ENCODE measurements at regions of chr7 and their contacts with region 1.

Region 1: GRCh38 chr7:149742075-149742701 is 31.2 kb downstream of the ZNF467 start:
- DNase-seq: peak; percentile 58
- ATAC-seq: peak; percentile 89
- H3K4me3 Mint-ChIP-seq: peak overlapping the region; percentile 76
- H3K27ac Mint-ChIP-seq: no peak overlapping the region
- H3K4me1 Mint-ChIP-seq: peaks cover 10% of the 10 kb centered on the region
- H3K27me3 Mint-ChIP-seq: peaks cover 26% of the 10 kb centered on the region
- CTCF ChIP-seq: peak; percentile 64

Region 2: GRCh38 chr7:149615690-149616270 is 126.4 kb before region 1 on chr7:
- CTCF ChIA-PET with region 1: no interaction called
- POLR2A ChIA-PET with region 1: no interaction called
- intact Hi-C with region 1: no loop called
- DNase-seq: no peak
- ATAC-seq: no peak
- H3K4me3 Mint-ChIP-seq: no peak overlapping the region
- H3K27ac Mint-ChIP-seq: no peak overlapping the region
- H3K4me1 Mint-ChIP-seq: peaks cover 12% of the 10 kb centered on the region
- H3K27me3 Mint-ChIP-seq: no peaks in the 10 kb centered on the region
- CTCF ChIP-seq: no peak

Region 3: GRCh38 chr7:149662591-149663095 is 79.5 kb before region 1 on chr7:
- CTCF ChIA-PET with region 1: interaction called, 36 read pairs
- POLR2A ChIA-PET with region 1: no interaction called
- intact Hi-C with region 1: loop called (anchors 1 kb)
- DNase-seq: peak; percentile 25
- ATAC-seq: peak; percentile 66
- H3K4me3 Mint-ChIP-seq: no peak overlapping the region
- H3K27ac Mint-ChIP-seq: no peak overlapping the region
- H3K4me1 Mint-ChIP-seq: no peaks in the 10 kb centered on the region
- H3K27me3 Mint-ChIP-seq: peaks cover 41% of the 10 kb centered on the region
- CTCF ChIP-seq: no peak

Region 4: DNA sequence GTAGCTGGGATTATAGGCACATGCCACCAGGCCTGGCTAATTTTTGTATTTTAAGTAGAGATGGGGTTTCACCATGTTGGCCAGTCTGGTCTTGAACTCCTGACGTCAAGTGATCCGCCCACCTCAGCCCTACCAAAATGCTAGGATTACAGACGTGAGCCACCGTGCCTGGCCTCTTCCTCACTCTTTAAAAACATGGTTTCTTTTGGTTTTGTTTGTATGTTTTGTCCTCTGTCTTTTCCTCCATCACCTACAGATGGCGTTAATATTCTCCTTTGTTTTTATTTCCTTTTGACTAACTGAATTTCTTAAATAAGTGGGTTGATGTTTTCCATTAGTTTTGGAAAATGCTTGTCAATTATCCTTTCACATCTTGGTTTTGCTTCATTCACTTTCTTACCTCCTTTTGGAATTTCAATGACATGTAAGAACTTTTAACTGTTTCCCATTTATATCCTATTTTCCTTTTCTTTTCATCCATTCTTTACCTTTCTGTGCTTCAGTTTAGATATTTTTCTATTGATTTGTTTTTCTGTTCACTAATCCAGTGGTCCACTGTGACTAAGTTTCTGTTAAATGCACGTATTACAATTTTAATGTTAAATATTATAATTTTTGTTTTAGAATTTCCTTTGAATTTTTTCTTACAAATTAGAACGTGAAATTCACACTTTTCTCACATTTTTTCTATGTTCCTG is 72.9 kb before region 1 on chr7:
- CTCF ChIA-PET with region 1: interaction called, 14 read pairs
- POLR2A ChIA-PET with region 1: no interaction called
- intact Hi-C with region 1: loop called (anchors 1 kb)
- DNase-seq: no peak
- ATAC-seq: no peak
- H3K4me3 Mint-ChIP-seq: no peak overlapping the region
- H3K27ac Mint-ChIP-seq: no peak overlapping the region
- H3K4me1 Mint-ChIP-seq: no peaks in the 10 kb centered on the region
- H3K27me3 Mint-ChIP-seq: peaks cover 44% of the 10 kb centered on the region
- CTCF ChIP-seq: no peak

Region 5: DNA sequence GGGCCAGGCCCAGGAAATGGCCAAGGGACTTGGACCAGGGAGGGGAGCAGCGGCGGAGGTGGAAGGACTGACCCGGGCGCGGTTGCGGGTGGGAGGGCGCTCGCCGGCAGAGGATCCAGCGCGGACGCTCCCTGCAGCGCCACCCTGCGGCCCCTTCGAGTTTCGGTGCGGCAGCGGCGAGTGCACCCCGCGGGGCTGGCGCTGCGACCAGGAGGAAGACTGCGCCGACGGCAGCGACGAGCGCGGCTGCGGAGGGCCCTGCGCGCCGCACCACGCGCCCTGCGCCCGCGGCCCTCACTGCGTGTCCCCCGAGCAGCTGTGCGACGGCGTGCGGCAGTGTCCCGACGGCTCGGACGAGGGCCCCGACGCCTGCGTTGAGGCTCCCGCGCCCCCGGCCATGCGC is 48.0 kb after region 1 on chr7:
- CTCF ChIA-PET with region 1: no interaction called
- POLR2A ChIA-PET with region 1: no interaction called
- intact Hi-C with region 1: no loop called
- DNase-seq: no peak
- ATAC-seq: no peak
- H3K4me3 Mint-ChIP-seq: no peak overlapping the region
- H3K27ac Mint-ChIP-seq: no peak overlapping the region
- H3K4me1 Mint-ChIP-seq: peaks cover 2% of the 10 kb centered on the region
- H3K27me3 Mint-ChIP-seq: peaks cover 21% of the 10 kb centered on the region
- CTCF ChIP-seq: no peak

Measured in activated B cell treated with CpG ODN at 0.5 μM for 24 hours (primary cell).